Activated naive CD4-positive, alpha-beta T cell treated with anti-CD3 and anti-CD28 coated beads, Interleukin-2, amount 10 ng/mL, durations not matched to agents 7 days and 5 days (primary cell): ENCODE measurements at regions of chr3 and their contacts with region 1.

Region 1: GRCh38 chr3:32947789-32948238 is 3.6 kb upstream of the CCR4 start:
- DNase-seq: peak; percentile 95
- H3K4me3 Mint-ChIP-seq: no peak overlapping the region
- H3K27ac Mint-ChIP-seq: peak overlapping the region; percentile 49
- H3K4me1 Mint-ChIP-seq: peaks cover 45% of the 10 kb centered on the region
- H3K27me3 Mint-ChIP-seq: no peaks in the 10 kb centered on the region

Region 2: GRCh38 chr3:32856355-32856889 is 91.4 kb before region 1 on chr3:
- CTCF ChIA-PET with region 1: no interaction called
- DNase-seq: no peak
- H3K4me3 Mint-ChIP-seq: no peak overlapping the region
- H3K27ac Mint-ChIP-seq: no peak overlapping the region
- H3K4me1 Mint-ChIP-seq: no peaks in the 10 kb centered on the region
- H3K27me3 Mint-ChIP-seq: peaks cover 37% of the 10 kb centered on the region

Region 3: DNA sequence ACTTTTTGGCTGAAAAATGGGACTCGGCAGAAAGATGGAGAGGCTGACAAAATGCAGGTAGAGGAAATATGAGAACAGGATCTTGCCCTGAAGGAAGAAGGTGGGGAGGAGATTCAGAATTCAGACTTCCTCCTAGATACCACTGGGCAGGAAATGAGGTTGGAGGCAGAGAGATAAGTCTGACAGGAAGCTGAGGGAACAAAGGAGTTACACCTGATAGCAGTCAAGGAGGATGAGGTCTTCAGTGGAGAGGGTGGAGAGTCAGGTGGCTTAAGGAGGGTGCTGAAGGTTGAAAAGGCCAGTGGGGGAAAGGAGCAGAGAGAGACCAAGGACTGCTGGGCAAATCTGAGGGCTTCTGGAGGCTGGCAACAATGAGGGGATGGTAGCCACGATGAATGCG is 60.5 kb after region 1 on chr3:
- CTCF ChIA-PET with region 1: interaction called, 10 read pairs
- DNase-seq: peak; percentile 34
- H3K4me3 Mint-ChIP-seq: peak overlapping the region; percentile 5
- H3K27ac Mint-ChIP-seq: peak overlapping the region; percentile 84
- H3K4me1 Mint-ChIP-seq: peaks cover 33% of the 10 kb centered on the region
- H3K27me3 Mint-ChIP-seq: no peaks in the 10 kb centered on the region

Region 4: DNA sequence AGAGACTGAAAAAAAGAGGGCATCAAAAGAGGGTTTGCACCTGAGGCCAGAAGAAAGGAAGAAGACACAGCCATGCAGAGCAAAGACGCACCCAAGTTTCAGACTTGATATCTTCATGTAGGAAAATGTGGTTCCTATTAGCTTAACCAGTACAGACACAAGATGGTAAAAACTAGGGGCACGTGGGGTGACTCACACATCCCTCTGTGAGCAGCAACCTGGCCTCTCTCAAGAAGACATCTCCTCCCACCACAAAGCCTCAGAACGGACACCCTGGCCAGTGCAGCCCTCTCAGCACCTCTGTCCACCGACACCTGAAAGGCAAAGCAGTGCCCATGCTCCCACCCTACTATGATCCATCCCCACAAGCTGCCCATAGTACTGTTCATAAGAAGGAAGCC is 115.8 kb after region 1 on chr3:
- CTCF ChIA-PET with region 1: interaction called, 31 read pairs
- DNase-seq: peak; percentile 74
- H3K4me3 Mint-ChIP-seq: peak overlapping the region; percentile 35
- H3K27ac Mint-ChIP-seq: peak overlapping the region; percentile 89
- H3K4me1 Mint-ChIP-seq: peaks cover 73% of the 10 kb centered on the region
- H3K27me3 Mint-ChIP-seq: no peaks in the 10 kb centered on the region

Region 5: DNA sequence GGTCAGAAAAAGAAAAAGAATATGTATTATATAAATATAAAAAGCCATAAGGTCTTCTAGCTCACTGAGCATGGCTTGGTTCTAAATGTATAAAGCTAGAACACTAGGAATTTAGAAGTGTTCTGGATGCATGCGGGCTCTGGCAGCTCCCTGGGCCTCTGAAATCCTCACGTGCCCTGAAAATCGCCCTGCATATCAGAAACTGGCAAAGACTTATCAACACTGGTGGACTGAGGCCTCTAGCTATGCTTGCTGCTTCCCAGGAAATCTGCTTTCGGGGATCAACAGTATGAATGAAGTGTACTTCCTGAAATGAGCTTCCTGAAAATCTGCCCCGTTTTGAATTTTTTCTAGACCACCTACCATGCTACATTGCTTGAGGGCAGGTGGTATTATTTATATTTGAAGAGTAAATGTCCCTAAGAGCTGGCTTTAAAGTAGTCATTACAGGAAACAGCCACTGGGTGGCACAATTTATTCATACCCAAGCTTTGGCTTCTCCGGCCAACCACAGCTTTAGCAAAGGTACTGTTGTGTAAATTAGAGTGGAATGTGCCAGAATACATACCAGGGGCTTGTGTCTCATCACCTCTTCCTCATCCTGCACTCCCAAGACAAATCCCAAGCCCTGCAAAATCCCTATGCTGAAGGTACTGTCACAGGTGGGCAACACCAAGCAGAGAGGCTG is 183.7 kb after region 1 on chr3:
- CTCF ChIA-PET with region 1: interaction called, 11 read pairs
- DNase-seq: peak; percentile 54
- H3K4me3 Mint-ChIP-seq: no peak overlapping the region
- H3K27ac Mint-ChIP-seq: no peak overlapping the region
- H3K4me1 Mint-ChIP-seq: peaks cover 12% of the 10 kb centered on the region
- H3K27me3 Mint-ChIP-seq: no peaks in the 10 kb centered on the region